Mammary epithelial cell (primary cell): ENCODE measurements at regions of chr1 and their contacts with region 1.

Region 1: DNA sequence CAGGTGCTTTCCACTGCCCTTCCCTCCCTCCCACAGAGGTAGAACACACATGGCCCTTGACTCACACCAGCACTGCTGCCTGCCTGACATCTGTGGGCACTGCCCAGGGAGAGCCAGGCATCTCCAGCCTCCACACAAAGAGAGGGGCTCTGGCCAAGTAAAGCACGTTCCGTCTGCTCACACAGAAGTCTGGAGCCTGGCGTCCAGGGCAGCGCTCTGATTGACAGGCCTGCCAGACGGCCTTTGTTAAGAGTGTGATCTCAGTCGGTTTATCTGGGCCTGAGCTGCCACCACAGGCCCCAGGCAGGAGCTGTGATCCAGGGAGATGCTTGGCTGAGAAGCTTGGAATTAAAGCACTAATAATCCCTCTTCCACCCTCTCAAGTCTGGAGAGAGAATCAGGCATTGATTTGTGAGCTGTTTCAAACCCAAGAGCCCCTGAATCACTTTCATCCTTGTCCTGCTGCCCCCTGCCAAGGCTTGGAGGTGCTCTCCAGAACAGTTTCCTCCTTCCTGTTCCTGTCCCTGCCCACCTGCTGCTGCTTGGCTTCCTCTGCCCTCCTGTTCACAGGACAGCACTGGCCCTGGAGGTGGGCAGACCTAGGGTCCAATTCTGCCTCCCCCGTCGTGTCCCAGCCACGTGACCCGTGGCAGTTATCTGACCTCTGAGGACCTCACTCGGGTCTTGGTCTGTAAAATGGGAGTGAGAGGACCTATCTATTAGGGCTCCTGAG is 3.7 kb downstream of the DMRTB1 start:
- DNase-seq: no peak
- H3K4me3 ChIP-seq: no peak overlapping the region
- H3K27ac ChIP-seq: no peak overlapping the region
- H3K4me1 ChIP-seq: no peaks in the 10 kb centered on the region
- H3K27me3 ChIP-seq: no peaks in the 10 kb centered on the region
- CTCF ChIP-seq: no peak

Region 2: DNA sequence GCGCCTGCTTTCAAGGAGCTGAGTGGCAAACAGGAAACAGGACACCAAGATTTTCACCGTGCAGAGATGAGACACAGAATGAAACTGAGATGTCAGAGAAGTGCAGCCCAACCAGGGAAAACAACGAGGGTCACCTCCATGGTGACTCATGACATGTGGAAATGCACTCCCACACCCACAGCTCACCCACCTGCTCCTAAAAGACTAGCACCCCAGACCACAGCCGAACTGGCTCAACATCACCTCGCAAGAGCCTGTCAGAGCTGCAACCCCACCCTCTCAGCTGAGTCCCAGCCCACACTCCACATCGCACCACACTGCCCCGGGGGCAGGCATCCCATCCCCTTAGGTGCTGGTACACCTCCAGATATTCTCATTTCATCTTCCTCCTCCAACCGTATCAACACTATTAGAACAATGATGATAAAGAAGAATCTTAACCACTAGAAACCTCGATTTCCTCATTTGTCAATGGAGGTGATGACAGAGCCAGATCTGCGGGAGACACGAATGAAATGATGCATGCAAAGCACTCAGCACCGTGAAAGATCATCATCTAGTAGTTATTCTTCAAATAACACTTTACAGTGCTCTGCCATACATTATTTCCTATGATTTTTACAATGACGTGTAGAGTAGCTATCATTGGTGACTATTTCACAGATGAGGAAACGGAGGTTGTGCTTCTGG is 99.5 kb after region 1 on chr1:
- CTCF ChIA-PET with region 1: no interaction called
- dilution Hi-C with region 1: loop called (anchors 5 kb)
- in situ Hi-C with region 1: no loop called
- intact Hi-C with region 1: no loop called
- DNase-seq: no peak
- H3K4me3 ChIP-seq: no peak overlapping the region
- H3K27ac ChIP-seq: no peak overlapping the region
- H3K4me1 ChIP-seq: no peaks in the 10 kb centered on the region
- H3K27me3 ChIP-seq: peaks cover 6% of the 10 kb centered on the region
- CTCF ChIP-seq: no peak

Region 3: DNA sequence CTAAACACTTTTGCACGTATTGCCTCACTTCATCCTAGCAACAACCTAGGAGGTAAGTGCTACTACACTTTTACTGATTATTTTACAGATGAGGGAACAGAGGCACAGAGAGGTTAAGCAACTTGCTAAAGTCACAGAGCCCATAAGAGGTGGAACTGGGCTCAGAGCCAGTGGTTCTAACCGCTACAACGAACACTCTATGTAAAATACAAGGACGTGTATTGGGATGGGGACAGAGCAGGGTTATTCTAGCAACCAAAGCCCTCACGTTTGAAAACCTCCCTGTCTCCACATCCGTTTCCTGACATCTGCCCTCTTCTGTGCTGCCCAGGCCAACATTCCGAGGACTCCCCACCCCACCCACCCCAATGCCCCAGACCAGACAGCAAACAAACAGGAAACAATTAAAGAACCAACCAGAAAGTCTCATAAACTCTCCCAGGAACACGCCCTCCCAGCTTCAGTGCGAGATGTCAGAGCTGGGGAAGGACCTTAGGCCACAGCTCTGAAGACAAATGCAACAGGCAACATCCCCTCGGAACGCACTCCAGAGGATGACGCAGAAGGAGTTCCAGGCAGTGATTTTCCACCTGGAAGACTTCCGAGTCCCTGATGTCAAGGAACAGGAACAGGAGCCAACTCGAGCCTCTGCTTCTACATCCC is 234.9 kb after region 1 on chr1:
- CTCF ChIA-PET with region 1: no interaction called
- dilution Hi-C with region 1: loop called (anchors 5 kb)
- in situ Hi-C with region 1: no loop called
- intact Hi-C with region 1: no loop called
- DNase-seq: no peak
- H3K4me3 ChIP-seq: no peak overlapping the region
- H3K27ac ChIP-seq: no peak overlapping the region
- H3K4me1 ChIP-seq: no peaks in the 10 kb centered on the region
- H3K27me3 ChIP-seq: no peaks in the 10 kb centered on the region
- CTCF ChIP-seq: no peak